ENCODE measurements at regions of chr16 and their contacts with region 1.

Region 1: DNA sequence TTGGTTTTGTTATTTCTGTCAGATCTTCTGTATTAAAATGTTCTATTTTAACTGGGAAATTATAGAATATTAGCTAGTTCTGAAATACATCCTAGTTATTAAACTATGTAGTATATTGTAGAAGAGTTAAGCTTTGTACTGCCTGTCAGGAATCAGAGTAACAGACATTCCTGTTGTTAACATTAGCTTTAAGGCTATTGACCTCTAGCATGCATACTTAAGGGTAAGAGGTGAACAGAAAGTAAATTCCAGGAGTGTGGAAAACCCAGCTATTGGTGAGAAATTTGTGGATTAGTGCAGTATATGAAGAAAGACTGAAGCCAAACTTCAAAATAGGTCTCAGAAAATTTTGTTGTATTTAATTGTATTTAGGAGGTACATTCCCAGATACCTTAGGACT is 111.3 kb downstream of the CHD9 start:
- DNase-seq: no peak
- ATAC-seq: no peak
- H3K4me3 ChIP-seq: no peak overlapping the region
- H3K27ac ChIP-seq: no peak overlapping the region
- H3K4me1 ChIP-seq: no peaks in the 10 kb centered on the region
- H3K27me3 ChIP-seq: no peaks in the 10 kb centered on the region
- CTCF ChIP-seq: no peak

Region 2: GRCh38 chr16:53207810-53208752 is 42.0 kb after region 1 on chr16:
- CTCF ChIA-PET with region 1: no interaction called
- POLR2A ChIA-PET with region 1: no interaction called
- intact Hi-C with region 1: loop called (anchors 5 kb)
- DNase-seq: peak; percentile 66
- ATAC-seq: peak; percentile 86
- H3K4me3 ChIP-seq: peak overlapping the region; percentile 75
- H3K27ac ChIP-seq: peak overlapping the region; percentile 83
- H3K4me1 ChIP-seq: peaks cover 4% of the 10 kb centered on the region
- H3K27me3 ChIP-seq: no peaks in the 10 kb centered on the region
- CTCF ChIP-seq: peak; percentile 64

Region 3: GRCh38 chr16:53220585-53220984 is 54.5 kb after region 1 on chr16:
- CTCF ChIA-PET with region 1: no interaction called
- POLR2A ChIA-PET with region 1: no interaction called
- intact Hi-C with region 1: no loop called
- DNase-seq: no peak
- ATAC-seq: no peak
- H3K4me3 ChIP-seq: no peak overlapping the region
- H3K27ac ChIP-seq: peak overlapping the region; percentile 60; the same call in 1 of the 2 replicates
- H3K4me1 ChIP-seq: peaks cover 35% of the 10 kb centered on the region
- H3K27me3 ChIP-seq: no peaks in the 10 kb centered on the region
- CTCF ChIP-seq: no peak

Region 4: DNA sequence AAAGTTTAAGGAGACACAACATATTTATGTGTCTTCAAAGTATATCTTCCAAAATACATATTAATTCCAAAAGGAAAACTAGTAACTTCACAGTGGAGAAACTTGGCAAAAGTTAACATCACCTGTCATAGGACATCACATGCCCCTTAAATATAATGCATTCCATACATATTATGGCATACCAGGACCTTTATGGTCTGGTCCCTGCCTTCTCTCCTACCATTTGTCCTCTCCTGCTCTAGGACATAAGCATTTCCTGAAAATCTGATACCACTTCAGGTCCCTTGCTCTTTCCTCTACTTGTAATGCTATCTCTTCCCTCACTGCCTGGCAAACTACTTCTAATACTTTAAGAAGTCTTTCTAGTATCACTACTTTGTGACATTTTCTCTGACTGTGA is 100.1 kb after region 1 on chr16:
- CTCF ChIA-PET with region 1: no interaction called
- POLR2A ChIA-PET with region 1: interaction called, 16 read pairs
- intact Hi-C with region 1: no loop called
- DNase-seq: peak; percentile 18
- ATAC-seq: peak; percentile 42; the same call in 1 of the 2 replicates
- H3K4me3 ChIP-seq: no peak overlapping the region
- H3K27ac ChIP-seq: no peak overlapping the region
- H3K4me1 ChIP-seq: 0 out of 2 replicates have a peak, but pooled peaks cover 8% of the 10 kb centered on the region
- H3K27me3 ChIP-seq: no peaks in the 10 kb centered on the region
- CTCF ChIP-seq: no peak

Measured in PC-3 (cell line).